MCF 10A (cell line): ENCODE measurements at regions of chr1 and their contacts with region 1.

Region 1: GRCh38 chr1:61481313-61481712 is 243.6 kb downstream of the TM2D1 start:
- DNase-seq: peak; percentile 83
- H3K4me3 Mint-ChIP-seq: peak overlapping the region; percentile 49
- H3K27ac Mint-ChIP-seq: peak overlapping the region; percentile 83
- H3K4me1 Mint-ChIP-seq: peaks cover 24% of the 10 kb centered on the region
- H3K27me3 Mint-ChIP-seq: no peaks in the 10 kb centered on the region
- CTCF ChIP-seq: no peak

Region 2: DNA sequence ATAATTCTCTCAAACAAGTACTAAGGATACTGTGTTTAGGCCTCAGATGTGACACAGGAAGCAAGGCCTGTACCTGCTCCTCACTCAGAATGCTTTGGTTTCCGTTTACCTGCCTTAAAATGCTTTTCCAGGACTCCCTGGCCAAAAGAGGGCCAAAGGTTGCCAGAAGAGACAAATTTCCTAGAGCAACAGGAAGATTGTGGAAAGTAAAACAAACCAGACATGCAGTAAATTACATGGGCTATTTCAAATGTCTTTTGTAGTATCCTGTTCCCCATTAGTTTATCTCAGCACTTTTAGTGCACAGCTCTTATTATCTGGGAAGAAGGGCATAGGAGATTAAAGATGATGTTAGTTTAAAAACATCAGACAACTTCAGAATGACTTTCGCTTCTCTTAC is 119.0 kb before region 1 on chr1:
- CTCF ChIA-PET with region 1: no interaction called
- POLR2A ChIA-PET with region 1: no interaction called
- intact Hi-C with region 1: no loop called
- DNase-seq: no peak
- H3K4me3 Mint-ChIP-seq: no peak overlapping the region
- H3K27ac Mint-ChIP-seq: no peak overlapping the region
- H3K4me1 Mint-ChIP-seq: peaks cover 6% of the 10 kb centered on the region
- H3K27me3 Mint-ChIP-seq: no peaks in the 10 kb centered on the region
- CTCF ChIP-seq: no peak

Region 3: GRCh38 chr1:61378494-61379180 is 102.7 kb before region 1 on chr1:
- CTCF ChIA-PET with region 1: no interaction called
- POLR2A ChIA-PET with region 1: no interaction called
- intact Hi-C with region 1: no loop called
- DNase-seq: no peak
- H3K4me3 Mint-ChIP-seq: no peak overlapping the region
- H3K27ac Mint-ChIP-seq: no peak overlapping the region
- H3K4me1 Mint-ChIP-seq: peaks cover 6% of the 10 kb centered on the region
- H3K27me3 Mint-ChIP-seq: no peaks in the 10 kb centered on the region
- CTCF ChIP-seq: no peak

Region 4: DNA sequence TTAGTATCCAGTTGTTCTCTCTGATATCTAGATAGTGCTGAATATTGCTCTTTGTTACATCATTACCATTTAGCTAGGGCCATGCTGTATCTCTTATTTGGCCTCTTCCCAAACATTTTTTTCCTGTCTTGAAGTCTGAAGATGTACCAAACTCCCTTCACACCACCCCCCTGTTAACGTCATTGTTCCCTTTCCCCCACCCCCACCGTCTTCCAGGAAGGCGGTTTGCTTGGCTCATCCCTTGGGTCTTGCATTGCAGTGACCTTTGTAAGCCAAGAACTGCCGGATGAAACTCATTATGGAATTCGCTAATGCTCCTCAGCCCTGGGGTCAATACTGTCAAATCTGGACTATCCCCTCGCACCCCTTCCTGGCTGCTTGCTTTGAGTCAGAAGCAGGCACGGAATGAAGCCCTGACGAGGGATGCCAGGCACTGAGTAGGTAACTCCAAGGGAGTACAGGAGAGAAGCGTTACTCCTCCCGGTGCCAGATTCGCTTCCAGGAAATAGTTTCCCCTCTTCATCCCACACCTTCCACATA is 39.5 kb before region 1 on chr1:
- CTCF ChIA-PET with region 1: no interaction called
- POLR2A ChIA-PET with region 1: no interaction called
- intact Hi-C with region 1: no loop called
- DNase-seq: no peak
- H3K4me3 Mint-ChIP-seq: no peak overlapping the region
- H3K27ac Mint-ChIP-seq: no peak overlapping the region
- H3K4me1 Mint-ChIP-seq: peaks cover 8% of the 10 kb centered on the region
- H3K27me3 Mint-ChIP-seq: no peaks in the 10 kb centered on the region
- CTCF ChIP-seq: no peak

Region 5: DNA sequence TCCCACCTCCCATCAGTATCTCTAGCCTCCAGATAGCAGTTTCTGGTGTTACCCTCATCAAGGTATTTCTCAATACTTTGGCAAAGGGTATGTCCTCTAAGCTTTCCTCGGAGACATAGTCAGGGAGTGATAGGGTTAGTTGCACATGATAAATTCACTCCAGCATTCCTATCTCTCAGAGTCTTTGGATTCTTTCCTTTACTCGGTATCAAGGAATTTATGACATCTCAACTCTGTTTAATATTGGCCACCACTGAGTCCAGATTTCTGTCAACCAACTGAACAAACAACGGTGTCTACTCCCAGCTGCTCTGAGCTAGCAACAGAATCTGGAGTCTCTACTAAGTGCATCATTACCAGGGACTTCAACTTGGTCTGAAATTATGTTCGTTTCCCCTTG is 10.2 kb after region 1 on chr1:
- CTCF ChIA-PET with region 1: interaction called, 4 read pairs
- POLR2A ChIA-PET with region 1: interaction called, 26 read pairs
- intact Hi-C with region 1: no loop called
- DNase-seq: no peak
- H3K4me3 Mint-ChIP-seq: no peak overlapping the region
- H3K27ac Mint-ChIP-seq: no peak overlapping the region
- H3K4me1 Mint-ChIP-seq: peaks cover 23% of the 10 kb centered on the region
- H3K27me3 Mint-ChIP-seq: no peaks in the 10 kb centered on the region
- CTCF ChIP-seq: no peak

Region 6: DNA sequence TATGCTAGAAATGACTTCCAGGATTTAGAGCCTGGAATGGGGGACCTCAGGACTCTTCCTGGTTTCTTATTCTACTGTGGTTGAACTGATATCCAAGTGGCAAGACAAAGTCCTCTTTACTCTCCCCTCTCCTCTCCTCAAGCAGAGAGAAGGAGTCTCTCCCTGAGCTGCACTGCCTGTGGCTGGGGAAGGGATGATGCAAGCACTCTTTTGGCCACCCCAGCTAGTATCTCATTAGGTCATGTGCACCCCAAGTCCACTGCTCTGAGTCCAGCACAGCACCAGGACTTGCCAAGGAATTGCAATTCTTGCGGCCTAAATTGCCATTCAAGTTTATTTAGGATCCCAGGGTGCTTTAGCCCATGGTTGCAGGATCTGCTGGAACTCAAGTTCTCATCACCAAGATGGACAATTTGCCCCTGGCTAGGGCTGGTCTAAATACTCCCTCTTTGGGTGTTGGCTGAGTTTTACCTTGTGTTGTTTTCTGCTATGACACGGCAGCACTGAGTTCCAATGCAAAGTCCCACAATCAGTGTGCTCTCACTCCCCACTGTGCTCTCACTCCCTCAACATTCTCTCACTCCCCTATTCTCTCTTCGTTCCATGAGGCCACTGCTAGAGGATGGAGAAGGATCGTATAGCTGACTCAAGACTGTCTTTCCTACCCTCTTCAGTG is 71.5 kb after region 1 on chr1:
- CTCF ChIA-PET with region 1: no interaction called
- POLR2A ChIA-PET with region 1: no interaction called
- intact Hi-C with region 1: no loop called
- DNase-seq: no peak
- H3K4me3 Mint-ChIP-seq: no peak overlapping the region
- H3K27ac Mint-ChIP-seq: no peak overlapping the region
- H3K4me1 Mint-ChIP-seq: no peaks in the 10 kb centered on the region
- H3K27me3 Mint-ChIP-seq: no peaks in the 10 kb centered on the region
- CTCF ChIP-seq: no peak